Heart left ventricle (tissue), 16 donors: ENCODE measurements at regions of chr12 and their contacts with region 1.

Region 1: GRCh38 chr12:45170456-45171042 is 45.3 kb upstream of the ANO6 start:
- DNase-seq: peak; percentile 72 to 86 (median 78)
- ATAC-seq: peak; percentile 42 to 86 (median 72)
- H3K4me3 ChIP-seq: no peak overlapping the region
- H3K27ac ChIP-seq: no peak overlapping the region
- H3K4me1 ChIP-seq: peaks cover 0 to 17% (median 0%) of the 10 kb centered on the region in 12 donors
- H3K27me3 ChIP-seq: no peaks in the 10 kb centered on the region
- CTCF ChIP-seq: peak; percentile 79 to 96 (median 92)
- POLR2A ChIP-seq: no peak

Region 2: GRCh38 chr12:45268672-45269411 is 98.3 kb after region 1 on chr12:
- intact Hi-C with region 1: loop called in 1 of 10 experiments (anchors 10 kb)
- DNase-seq: peak; percentile 84 to 89 (median 87)
- ATAC-seq: peak; percentile 59 to 77 (median 71)
- H3K4me3 ChIP-seq: peak overlapping the region in 6 of 12 donors; percentile 3 to 28 (median 8)
- H3K27ac ChIP-seq: peak overlapping the region in 11 of 12 donors; percentile 10 to 71 (median 45)
- H3K4me1 ChIP-seq: peaks cover 13 to 66% (median 45%) of the 10 kb centered on the region in 12 donors
- H3K27me3 ChIP-seq: no peaks in the 10 kb centered on the region
- CTCF ChIP-seq: peak in 11 of 12 donors; percentile 24 to 67 (median 55)
- POLR2A ChIP-seq: no peak

Region 3: GRCh38 chr12:45388545-45388944 is 218.0 kb after region 1 on chr12:
- intact Hi-C with region 1: loop called in 6 of 10 experiments (anchors 5 to 10 kb)
- DNase-seq: peak in 2 of 5 donors; percentile 22 to 28
- ATAC-seq: peak in 3 of 4 donors; percentile 48 to 71 (median 60)
- H3K4me3 ChIP-seq: no peak overlapping the region
- H3K27ac ChIP-seq: peak overlapping the region in 1 of 12 donors; percentile 40
- H3K4me1 ChIP-seq: peaks cover 0 to 5% (median 0%) of the 10 kb centered on the region in 12 donors
- H3K27me3 ChIP-seq: no peaks in the 10 kb centered on the region
- CTCF ChIP-seq: peak; percentile 37 to 76 (median 60)
- POLR2A ChIP-seq: no peak

Region 4: DNA sequence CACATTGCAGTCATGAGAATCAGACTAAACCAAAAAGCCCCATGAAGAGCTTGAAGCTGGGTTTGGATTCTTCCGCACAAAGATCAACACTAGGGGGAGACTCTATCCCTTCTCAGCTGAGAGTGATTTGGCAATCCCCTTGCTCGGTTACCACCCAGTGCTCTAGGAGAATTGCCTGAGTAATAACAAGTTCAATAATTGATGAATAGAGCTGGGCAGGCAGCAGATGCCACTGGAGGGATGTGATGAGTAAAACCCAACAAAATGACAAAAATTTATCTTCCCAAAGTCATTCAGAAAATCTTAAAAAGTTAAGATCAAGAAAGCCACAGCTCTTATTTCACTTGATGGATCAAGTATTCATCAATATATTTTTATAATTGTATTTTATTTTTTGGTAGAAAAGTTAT is 373.4 kb after region 1 on chr12:
- intact Hi-C with region 1: loop called in 1 of 10 experiments (anchors 10 kb)
- DNase-seq: peak in 3 of 5 donors; percentile 37 to 46 (median 39)
- ATAC-seq: peak; percentile 55 to 94 (median 78)
- H3K4me3 ChIP-seq: no peak overlapping the region
- H3K27ac ChIP-seq: no peak overlapping the region
- H3K4me1 ChIP-seq: peaks cover 0 to 10% (median 0%) of the 10 kb centered on the region in 12 donors
- H3K27me3 ChIP-seq: no peaks in the 10 kb centered on the region
- CTCF ChIP-seq: peak; percentile 68 to 82 (median 76)
- POLR2A ChIP-seq: no peak